PC-3 (cell line): ENCODE measurements at regions of chr7 and their contacts with region 1.

Region 1: DNA sequence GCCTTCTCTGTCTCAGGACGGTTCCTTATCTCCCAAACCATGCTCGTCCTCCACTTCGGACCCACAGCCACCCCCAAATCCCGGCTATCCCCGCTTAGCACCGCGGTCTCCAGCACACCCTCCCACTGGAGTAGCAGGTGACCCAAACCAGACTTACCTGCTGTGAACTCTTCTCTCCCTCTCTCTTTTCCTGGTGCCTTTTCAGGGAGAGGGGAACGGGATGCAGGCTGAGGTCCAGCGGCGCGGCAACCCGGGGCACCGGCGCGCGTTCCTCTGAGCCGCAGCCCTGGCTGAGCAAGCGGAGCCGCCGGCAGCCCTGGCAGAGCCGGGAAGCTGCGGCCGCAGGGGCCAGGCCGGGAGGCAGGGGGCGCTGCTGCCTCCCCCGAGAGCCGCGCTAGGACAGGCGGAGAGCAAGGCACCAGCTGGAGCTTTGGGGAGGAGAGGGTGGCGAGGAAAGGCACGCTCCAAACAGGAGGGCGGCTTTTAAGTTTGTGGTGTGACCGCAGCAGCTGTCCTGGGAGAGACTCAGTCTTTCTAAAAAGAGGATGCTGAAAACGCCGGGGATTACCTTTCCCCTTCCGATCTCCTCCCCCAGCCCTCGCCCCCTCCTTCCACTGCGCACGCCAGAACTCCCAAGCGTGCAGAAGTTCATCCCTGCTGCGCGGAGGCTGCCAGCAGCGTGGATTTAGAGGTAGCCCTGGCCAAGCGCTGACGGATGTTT is at the start of gene SEMA3D:
- DNase-seq: peak; percentile 84
- ATAC-seq: peak; percentile 82
- H3K4me3 ChIP-seq: peak within 1 kb of the TSS; percentile 90
- H3K27ac ChIP-seq: no peak within 1 kb of the TSS
- H3K4me1 ChIP-seq: peaks cover 18% of the 10 kb centered on the region; the same call in 1 of the 2 replicates
- H3K27me3 ChIP-seq: no peaks in the 10 kb centered on the region
- CTCF ChIP-seq: peak; percentile 83
- total RNA-seq, gene SEMA3D: 4.0 and 4.8 TPM in 2 replicates

Region 2: GRCh38 chr7:84985073-84985784 is 201.5 kb before region 1 on chr7:
- CTCF ChIA-PET with region 1: no interaction called
- POLR2A ChIA-PET with region 1: no interaction called
- intact Hi-C with region 1: no loop called
- DNase-seq: no peak
- ATAC-seq: no peak; the same call in 1 of the 2 replicates
- H3K4me3 ChIP-seq: no peak overlapping the region
- H3K27ac ChIP-seq: no peak overlapping the region
- H3K4me1 ChIP-seq: no peaks in the 10 kb centered on the region
- H3K27me3 ChIP-seq: no peaks in the 10 kb centered on the region
- CTCF ChIP-seq: peak; percentile 38

Region 3: GRCh38 chr7:85104432-85105205 is 82.1 kb before region 1 on chr7:
- CTCF ChIA-PET with region 1: interaction called, 3 read pairs
- POLR2A ChIA-PET with region 1: no interaction called
- intact Hi-C with region 1: loop called (anchors 2 kb)
- DNase-seq: peak; percentile 80
- ATAC-seq: peak; percentile 64
- H3K4me3 ChIP-seq: peak overlapping the region; percentile 42
- H3K27ac ChIP-seq: peak overlapping the region; percentile 81
- H3K4me1 ChIP-seq: peaks cover 40% of the 10 kb centered on the region
- H3K27me3 ChIP-seq: no peaks in the 10 kb centered on the region
- CTCF ChIP-seq: no peak

Region 4: GRCh38 chr7:85381212-85381611 is 194.5 kb after region 1 on chr7:
- CTCF ChIA-PET with region 1: no interaction called
- POLR2A ChIA-PET with region 1: no interaction called
- intact Hi-C with region 1: loop called (anchors 2 kb)
- DNase-seq: no peak
- ATAC-seq: no peak
- H3K4me3 ChIP-seq: no peak overlapping the region
- H3K27ac ChIP-seq: no peak overlapping the region
- H3K4me1 ChIP-seq: peaks cover 22% of the 10 kb centered on the region
- H3K27me3 ChIP-seq: no peaks in the 10 kb centered on the region
- CTCF ChIP-seq: no peak

Region 5: GRCh38 chr7:85447004-85447403 is 260.3 kb after region 1 on chr7:
- CTCF ChIA-PET with region 1: no interaction called
- POLR2A ChIA-PET with region 1: no interaction called
- intact Hi-C with region 1: no loop called
- DNase-seq: no peak
- ATAC-seq: no peak
- H3K4me3 ChIP-seq: no peak overlapping the region
- H3K27ac ChIP-seq: no peak overlapping the region
- H3K4me1 ChIP-seq: no peaks in the 10 kb centered on the region
- H3K27me3 ChIP-seq: no peaks in the 10 kb centered on the region
- CTCF ChIP-seq: no peak

Region 6: GRCh38 chr7:85554236-85555178 is 367.8 kb after region 1 on chr7:
- CTCF ChIA-PET with region 1: no interaction called
- POLR2A ChIA-PET with region 1: no interaction called
- intact Hi-C with region 1: loop called (anchors 1 kb)
- DNase-seq: peak; percentile 82
- ATAC-seq: peak; percentile 57
- H3K4me3 ChIP-seq: no peak overlapping the region
- H3K27ac ChIP-seq: no peak overlapping the region
- H3K4me1 ChIP-seq: no peaks in the 10 kb centered on the region
- H3K27me3 ChIP-seq: no peaks in the 10 kb centered on the region
- CTCF ChIP-seq: peak; percentile 79

Region 7: GRCh38 chr7:85829817-85830432 is 643.2 kb after region 1 on chr7:
- CTCF ChIA-PET with region 1: interaction called, 5 read pairs
- POLR2A ChIA-PET with region 1: no interaction called
- intact Hi-C with region 1: loop called (anchors 2 kb)
- DNase-seq: peak; percentile 58
- ATAC-seq: peak; percentile 77
- H3K4me3 ChIP-seq: no peak overlapping the region
- H3K27ac ChIP-seq: no peak overlapping the region
- H3K4me1 ChIP-seq: no peaks in the 10 kb centered on the region
- H3K27me3 ChIP-seq: no peaks in the 10 kb centered on the region
- CTCF ChIP-seq: peak; percentile 72

Region 8: GRCh38 chr7:85851571-85852193 is 665.0 kb after region 1 on chr7:
- CTCF ChIA-PET with region 1: no interaction called
- POLR2A ChIA-PET with region 1: no interaction called
- intact Hi-C with region 1: loop called (anchors 2 kb)
- DNase-seq: peak; percentile 51
- ATAC-seq: peak; percentile 50; the same call in 1 of the 2 replicates
- H3K4me3 ChIP-seq: no peak overlapping the region
- H3K27ac ChIP-seq: no peak overlapping the region
- H3K4me1 ChIP-seq: no peaks in the 10 kb centered on the region
- H3K27me3 ChIP-seq: 0 out of 2 replicates have a peak, but pooled peaks cover 2% of the 10 kb centered on the region
- CTCF ChIP-seq: peak; percentile 66